ENCODE measurements at regions of chr1 and their contacts with region 1.

Region 1: GRCh38 chr1:147892731-147893214 is 9.8 kb upstream of the GJA8 start:
- DNase-seq: peak; percentile 69

Region 2: GRCh38 chr1:147723691-147724323 is 169.0 kb before region 1 on chr1:
- CTCF ChIA-PET with region 1: interaction called, 32 read pairs
- POLR2A ChIA-PET with region 1: no interaction called
- DNase-seq: peak; percentile 72

Region 3: GRCh38 chr1:147878022-147878421 is 14.8 kb before region 1 on chr1:
- CTCF ChIA-PET with region 1: no interaction called
- POLR2A ChIA-PET with region 1: no interaction called
- DNase-seq: no peak